Dorsolateral prefrontal cortex (tissue), 120 donors: ENCODE measurements at regions of chr5 and their contacts with region 1.

Region 1: DNA sequence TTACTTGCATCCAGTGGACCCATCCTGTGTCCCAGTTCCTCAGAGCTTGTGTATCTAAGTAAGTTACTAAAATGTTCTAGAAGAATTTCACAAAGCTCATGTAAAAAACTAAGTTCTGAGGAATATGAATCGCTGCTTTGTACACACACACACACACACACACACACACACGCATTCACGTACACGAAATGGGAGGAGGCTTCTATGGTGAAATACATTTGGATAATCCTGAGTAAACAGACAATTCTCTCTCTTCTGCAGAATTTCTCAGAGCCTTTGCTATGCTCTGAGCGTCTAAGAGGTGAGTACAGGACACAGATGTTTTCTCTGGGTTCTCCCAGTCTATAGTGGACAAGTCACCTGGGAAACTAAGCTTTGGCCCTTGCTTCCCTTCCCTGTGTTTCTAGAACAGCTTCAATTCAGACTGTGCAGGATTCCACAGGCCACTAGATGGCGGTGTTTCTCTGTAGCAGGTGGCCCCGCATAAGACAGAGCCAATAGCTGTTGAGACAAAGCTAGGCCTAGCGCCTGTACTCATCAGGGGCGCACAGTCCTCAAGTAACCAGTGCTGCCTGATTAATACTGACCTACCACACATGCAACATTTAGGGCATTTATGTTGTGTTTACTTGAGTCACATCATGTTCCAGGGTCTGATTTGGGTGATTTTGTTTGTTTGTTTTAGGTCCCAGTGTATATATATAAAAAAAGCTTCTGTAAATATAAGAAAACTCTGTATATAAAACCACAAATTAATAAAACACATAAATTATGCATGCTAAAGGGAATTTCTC is 114.8 kb downstream of the LIFR start:
- DNase-seq: peak; percentile 82 to 97 (median 90)
- H3K4me3 ChIP-seq: no peak overlapping the region
- H3K27ac ChIP-seq: peak overlapping the region in 1 of 59 donors; percentile 48
- H3K27me3 ChIP-seq: peaks cover 0 to 7% (median 0%) of the 10 kb centered on the region in 45 donors
- CTCF ChIP-seq: peak; percentile 60 to 100 (median 97)

Region 2: GRCh38 chr5:38237681-38238080 is 204.0 kb before region 1 on chr5:
- intact Hi-C with region 1: no loop called
- DNase-seq: no peak
- H3K4me3 ChIP-seq: no peak overlapping the region
- H3K27ac ChIP-seq: no peak overlapping the region
- H3K27me3 ChIP-seq: no peaks in the 10 kb centered on the region
- CTCF ChIP-seq: no peak

Region 3: DNA sequence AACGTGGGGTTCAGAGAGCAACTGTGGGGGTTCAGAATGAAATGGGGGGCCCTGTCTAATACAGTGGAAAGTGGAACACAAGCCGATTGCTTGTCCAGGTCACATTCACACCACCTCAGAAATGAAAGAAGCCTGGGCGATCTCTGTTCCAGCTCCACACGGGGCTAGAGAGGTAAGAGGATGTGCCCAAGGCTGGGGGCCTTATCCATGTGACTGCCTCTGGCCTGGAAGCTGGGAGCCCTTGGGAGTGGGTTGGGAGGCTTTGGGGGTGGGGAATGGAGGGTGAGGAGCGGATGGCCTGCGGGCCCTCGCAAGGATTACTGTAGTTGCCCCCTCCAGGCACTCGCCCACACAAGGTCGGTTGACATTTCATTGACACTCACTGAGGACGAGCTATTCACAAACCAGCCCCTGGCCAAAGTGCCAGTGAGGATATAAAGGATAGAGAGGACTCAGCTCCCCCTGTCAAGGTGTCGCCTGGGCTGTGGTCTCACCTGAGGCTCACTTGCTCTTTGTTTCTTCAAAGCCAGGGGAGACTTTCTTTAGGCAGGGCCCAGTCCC is 28.1 kb after region 1 on chr5:
- intact Hi-C with region 1: loop called in 1 of 2 experiments (anchors 2 kb)
- DNase-seq: no peak
- H3K4me3 ChIP-seq: no peak overlapping the region
- H3K27ac ChIP-seq: peak overlapping the region in 18 of 59 donors; percentile 1 to 85 (median 54)
- H3K27me3 ChIP-seq: no peaks in the 10 kb centered on the region
- CTCF ChIP-seq: no peak

Region 4: GRCh38 chr5:38551030-38552017 is 109.7 kb after region 1 on chr5:
- intact Hi-C with region 1: loop called (anchors 5 kb)
- DNase-seq: peak in 2 of 10 donors; percentile 41 to 53
- H3K4me3 ChIP-seq: peak overlapping the region in 25 of 59 donors; percentile 3 to 96 (median 19)
- H3K27ac ChIP-seq: peak overlapping the region in 44 of 59 donors; percentile 0 to 98 (median 46)
- H3K27me3 ChIP-seq: no peaks in the 10 kb centered on the region
- CTCF ChIP-seq: peak in 55 of 56 donors; percentile 32 to 73 (median 57)

Region 5: GRCh38 chr5:38719916-38720315 is 278.3 kb after region 1 on chr5:
- intact Hi-C with region 1: loop called in 1 of 2 experiments (anchors 10 kb)
- DNase-seq: no peak
- H3K4me3 ChIP-seq: no peak overlapping the region
- H3K27ac ChIP-seq: peak overlapping the region in 27 of 59 donors; percentile 0 to 83 (median 43)
- H3K27me3 ChIP-seq: no peaks in the 10 kb centered on the region
- CTCF ChIP-seq: no peak

Region 6: GRCh38 chr5:38922199-38922598 is 480.5 kb after region 1 on chr5:
- intact Hi-C with region 1: loop called (anchors 5 to 10 kb)
- DNase-seq: peak in 9 of 10 donors; percentile 18 to 61 (median 44)
- H3K4me3 ChIP-seq: no peak overlapping the region
- H3K27ac ChIP-seq: no peak overlapping the region
- H3K27me3 ChIP-seq: no peaks in the 10 kb centered on the region
- CTCF ChIP-seq: peak; percentile 35 to 85 (median 69)